Common myeloid progenitor, CD34-positive (primary cell): ENCODE measurements at regions of chr1 and their contacts with region 1.

Region 1: GRCh38 chr1:160251687-160252526 is 10.4 kb downstream of the DCAF8 start:
- DNase-seq: peak; percentile 74 to 87 (median 84)
- H3K4me3 ChIP-seq: no peak overlapping the region
- H3K27ac ChIP-seq: peak overlapping the region; percentile 36 to 51
- H3K4me1 ChIP-seq: peaks cover 0 to 8% (median 0%) of the 10 kb centered on the region in 4 experiments
- H3K27me3 ChIP-seq: no peaks in the 10 kb centered on the region

Region 2: GRCh38 chr1:159911326-159912070 is 340.4 kb before region 1 on chr1:
- CTCF ChIA-PET with region 1: no interaction called
- POLR2A ChIA-PET with region 1: no interaction called
- DNase-seq: no peak
- H3K4me3 ChIP-seq: peak overlapping the region in 1 of 7 experiments; percentile 56
- H3K27ac ChIP-seq: peak overlapping the region; percentile 99
- H3K4me1 ChIP-seq: peaks cover 23 to 81% (median 76%) of the 10 kb centered on the region in 4 experiments
- H3K27me3 ChIP-seq: no peaks in the 10 kb centered on the region

Region 3: GRCh38 chr1:160085686-160086455 is 166.0 kb before region 1 on chr1:
- CTCF ChIA-PET with region 1: interaction called, 16 read pairs
- POLR2A ChIA-PET with region 1: no interaction called
- DNase-seq: peak; percentile 81 to 86 (median 81)
- H3K4me3 ChIP-seq: no peak overlapping the region
- H3K27ac ChIP-seq: no peak overlapping the region
- H3K4me1 ChIP-seq: peaks cover 0 to 9% (median 7%) of the 10 kb centered on the region in 4 experiments
- H3K27me3 ChIP-seq: peaks cover 1 to 36% (median 23%) of the 10 kb centered on the region in 5 experiments

Region 4: DNA sequence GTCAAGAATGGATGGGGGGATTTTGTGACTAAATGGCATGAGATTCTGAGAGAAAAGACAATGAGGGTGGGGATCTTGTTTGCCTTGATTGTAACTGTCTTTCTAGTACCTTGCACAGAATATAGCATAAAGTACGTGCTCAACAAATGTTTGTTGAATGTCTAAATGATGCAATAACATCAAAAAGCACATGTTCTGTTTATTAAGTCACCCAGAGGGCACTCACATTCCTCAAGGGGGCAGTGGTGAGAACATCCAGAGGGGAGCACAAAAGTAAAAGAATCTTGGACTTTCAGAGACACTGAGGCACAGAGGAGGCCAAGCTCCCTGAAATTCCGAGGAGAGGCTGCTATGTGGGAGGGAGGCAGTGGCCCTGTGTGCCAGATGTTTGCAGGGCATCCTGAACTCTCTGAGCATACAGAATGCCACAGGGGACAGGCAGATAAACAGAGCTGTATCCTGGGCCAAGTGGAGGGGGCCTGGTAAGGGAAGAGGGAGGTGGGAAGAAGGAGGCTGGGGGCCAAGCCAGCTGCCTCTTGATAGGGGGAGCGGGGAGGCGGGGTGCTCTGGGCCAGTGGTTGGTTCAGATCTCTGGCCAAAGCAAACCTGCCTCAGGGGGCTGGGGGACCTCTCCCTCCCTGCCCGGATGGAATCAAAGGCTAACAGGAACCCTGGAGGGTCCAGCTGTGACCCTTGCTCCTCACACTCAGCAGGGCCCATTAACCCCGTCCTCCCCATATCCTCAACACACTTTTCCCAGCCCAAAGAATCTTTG is 142.8 kb before region 1 on chr1:
- CTCF ChIA-PET with region 1: interaction called, 17 read pairs
- POLR2A ChIA-PET with region 1: no interaction called
- DNase-seq: peak; percentile 38 to 73 (median 68)
- H3K4me3 ChIP-seq: no peak overlapping the region
- H3K27ac ChIP-seq: no peak overlapping the region
- H3K4me1 ChIP-seq: peaks cover 0 to 8% (median 0%) of the 10 kb centered on the region in 4 experiments
- H3K27me3 ChIP-seq: no peaks in the 10 kb centered on the region

Region 5: DNA sequence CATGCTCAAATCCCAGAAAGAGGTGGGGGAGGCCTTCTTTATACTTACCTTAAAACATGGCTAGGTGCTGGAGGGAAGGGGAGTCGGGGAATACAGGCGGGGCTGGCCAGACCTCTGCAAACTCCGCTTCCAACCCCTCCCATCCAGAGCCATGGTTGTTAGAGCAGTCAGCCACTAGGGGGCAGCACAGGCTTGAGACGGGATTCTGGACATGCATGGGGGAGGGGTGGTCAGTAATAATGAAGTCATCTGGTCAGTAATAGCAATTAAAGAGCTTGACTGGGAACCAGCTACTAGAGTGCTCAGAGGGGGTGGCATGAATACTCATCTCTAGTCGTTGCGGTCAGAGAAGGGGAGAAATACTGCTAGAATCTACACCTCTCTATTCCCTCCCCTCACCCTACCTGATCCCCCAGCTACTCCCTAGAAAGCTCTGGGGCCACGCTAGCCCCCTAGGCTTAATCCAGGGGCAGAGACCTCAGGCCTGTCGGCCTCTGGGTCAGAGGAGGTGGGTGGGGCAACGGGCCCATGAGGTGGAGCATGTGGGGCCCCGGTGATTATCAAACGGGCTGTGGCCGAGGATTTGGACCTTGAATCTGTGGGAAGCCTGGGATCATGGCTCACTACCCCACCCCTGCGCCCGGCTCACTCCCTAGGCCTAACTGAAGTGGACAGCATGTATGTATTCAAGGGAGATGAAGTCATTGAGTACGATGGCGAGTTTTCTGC is 58.7 kb before region 1 on chr1:
- CTCF ChIA-PET with region 1: interaction called, 53 read pairs
- POLR2A ChIA-PET with region 1: interaction called, 3 read pairs
- DNase-seq: peak; percentile 67 to 80 (median 68)
- H3K4me3 ChIP-seq: no peak overlapping the region
- H3K27ac ChIP-seq: no peak overlapping the region
- H3K4me1 ChIP-seq: peaks cover 0 to 3% (median 0%) of the 10 kb centered on the region in 4 experiments
- H3K27me3 ChIP-seq: peaks cover 0 to 2% (median 0%) of the 10 kb centered on the region in 5 experiments

Region 6: GRCh38 chr1:160226623-160227022 is 25.3 kb before region 1 on chr1:
- CTCF ChIA-PET with region 1: interaction called, 101 read pairs
- POLR2A ChIA-PET with region 1: no interaction called
- DNase-seq: no peak
- H3K4me3 ChIP-seq: no peak overlapping the region
- H3K27ac ChIP-seq: no peak overlapping the region
- H3K4me1 ChIP-seq: no peaks in the 10 kb centered on the region
- H3K27me3 ChIP-seq: no peaks in the 10 kb centered on the region